ENCODE measurements at regions of chr14 and their contacts with region 1.

Region 1: GRCh38 chr14:102125546-102125945 is 14.2 kb upstream of the WDR20 start:
- DNase-seq: peak; percentile 14
- H3K4me3 Mint-ChIP-seq: peak overlapping the region; percentile 40
- H3K27ac Mint-ChIP-seq: peak overlapping the region; percentile 65
- H3K4me1 Mint-ChIP-seq: peaks cover 34% of the 10 kb centered on the region
- H3K27me3 Mint-ChIP-seq: no peaks in the 10 kb centered on the region
- CTCF ChIP-seq: no peak

Region 2: DNA sequence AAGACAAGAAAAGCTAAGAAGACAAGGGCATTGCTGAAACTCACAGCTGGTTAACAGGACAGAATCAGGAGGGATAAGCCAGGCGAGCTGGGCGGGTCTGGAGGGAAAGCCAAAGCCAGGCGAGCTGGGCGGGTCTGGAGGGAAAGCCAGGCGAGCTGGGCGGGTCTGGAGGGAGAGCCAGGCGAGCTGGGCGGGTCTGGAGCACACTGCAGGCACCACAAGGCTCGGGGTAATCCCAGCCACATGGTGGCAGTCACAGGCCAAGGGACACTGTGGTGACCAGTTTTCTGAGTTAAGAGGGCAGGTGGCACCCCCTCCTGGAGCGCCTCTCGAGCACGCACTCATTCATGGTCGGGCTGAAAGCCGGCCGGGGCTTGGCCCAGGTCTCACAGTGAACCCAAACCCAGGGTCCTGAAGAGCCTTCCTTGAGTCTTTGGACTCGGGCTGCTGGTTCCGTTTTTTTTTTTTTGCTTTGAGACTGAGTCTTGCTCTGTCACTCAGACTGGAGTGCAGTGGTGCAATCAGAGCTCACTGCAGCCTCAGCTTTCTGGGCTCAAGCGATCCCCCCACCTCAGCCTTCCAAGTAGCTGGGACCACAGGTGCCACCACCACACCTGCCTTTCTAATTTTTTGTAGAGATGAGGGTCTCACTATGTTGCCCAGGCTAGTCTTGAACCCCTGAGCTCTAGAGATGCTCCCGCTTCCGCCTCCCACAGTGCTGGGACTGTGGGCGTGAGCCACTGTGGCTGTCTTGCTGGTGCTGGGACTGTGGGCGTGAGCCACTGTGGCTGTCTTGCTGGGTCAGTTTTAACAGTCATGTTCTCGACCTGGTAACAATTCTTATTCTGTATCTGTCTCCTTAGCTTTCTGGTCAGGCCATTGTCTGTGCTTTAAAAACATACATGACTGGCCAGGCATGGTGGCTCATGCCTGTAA is 78.9 kb before region 1 on chr14:
- CTCF ChIA-PET with region 1: no interaction called
- intact Hi-C with region 1: no loop called
- DNase-seq: peak; percentile 88
- H3K4me3 Mint-ChIP-seq: no peak overlapping the region
- H3K27ac Mint-ChIP-seq: no peak overlapping the region
- H3K4me1 Mint-ChIP-seq: no peaks in the 10 kb centered on the region
- H3K27me3 Mint-ChIP-seq: no peaks in the 10 kb centered on the region
- CTCF ChIP-seq: peak; percentile 22

Region 3: DNA sequence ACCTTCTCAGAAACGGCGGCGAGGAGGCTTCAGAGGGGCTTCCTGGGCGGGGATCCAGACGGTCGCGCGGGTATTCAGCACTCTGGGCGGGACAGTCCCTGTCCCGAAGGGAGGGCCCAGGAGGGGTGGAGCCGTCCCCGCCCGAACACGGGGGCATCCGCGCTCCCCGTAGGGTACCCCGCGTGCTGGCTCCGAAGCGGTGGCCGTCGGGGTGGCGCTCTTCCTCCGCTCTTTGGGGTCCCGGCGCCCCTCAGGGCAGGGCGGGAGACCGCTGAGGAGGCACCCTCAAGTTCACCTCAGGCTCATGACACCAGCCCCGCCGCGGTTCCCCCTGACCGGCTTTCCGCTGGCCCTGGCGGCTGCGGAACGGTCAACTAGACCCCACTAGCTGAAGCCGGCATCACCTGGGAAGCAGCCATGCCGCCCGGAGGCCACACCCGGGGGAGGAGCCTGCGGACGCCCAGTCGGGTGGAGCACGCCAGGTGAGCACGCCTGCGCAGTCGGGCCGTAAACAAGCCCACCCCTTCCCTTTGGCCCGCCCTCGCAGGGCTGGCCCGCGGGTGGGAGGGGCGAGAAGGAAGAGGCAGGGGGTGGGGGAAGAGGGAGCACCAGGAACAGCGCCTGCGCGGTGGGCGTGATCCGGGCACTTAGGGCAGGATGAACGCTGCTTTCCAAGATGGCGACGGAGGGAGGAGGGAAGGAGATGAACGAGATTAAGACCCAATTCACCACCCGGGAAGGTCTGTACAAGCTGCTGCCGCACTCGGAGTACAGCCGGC is 13.9 kb after region 1 on chr14 and contains the start of gene WDR20:
- CTCF ChIA-PET with region 1: interaction called, 5 read pairs
- intact Hi-C with region 1: loop called (anchors 2 kb)
- DNase-seq: peak; percentile 99
- H3K4me3 Mint-ChIP-seq: peak within 1 kb of the TSS; percentile 97
- H3K27ac Mint-ChIP-seq: peak within 1 kb of the TSS; percentile 73
- H3K4me1 Mint-ChIP-seq: no peaks in the 10 kb centered on the region
- H3K27me3 Mint-ChIP-seq: no peaks in the 10 kb centered on the region
- CTCF ChIP-seq: no peak
- total RNA-seq, gene WDR20: 33.0 and 37.6 TPM in 2 replicates

Region 4: GRCh38 chr14:102209217-102209966 is 83.8 kb after region 1 on chr14:
- CTCF ChIA-PET with region 1: no interaction called
- intact Hi-C with region 1: no loop called
- DNase-seq: peak; percentile 21
- H3K4me3 Mint-ChIP-seq: no peak overlapping the region
- H3K27ac Mint-ChIP-seq: no peak overlapping the region
- H3K4me1 Mint-ChIP-seq: no peaks in the 10 kb centered on the region
- H3K27me3 Mint-ChIP-seq: no peaks in the 10 kb centered on the region
- CTCF ChIP-seq: no peak

Region 5: GRCh38 chr14:102370305-102370809 is 244.8 kb after region 1 on chr14:
- CTCF ChIA-PET with region 1: no interaction called
- intact Hi-C with region 1: no loop called
- DNase-seq: no peak
- H3K4me3 Mint-ChIP-seq: no peak overlapping the region
- H3K27ac Mint-ChIP-seq: no peak overlapping the region
- H3K4me1 Mint-ChIP-seq: no peaks in the 10 kb centered on the region
- H3K27me3 Mint-ChIP-seq: no peaks in the 10 kb centered on the region
- CTCF ChIP-seq: no peak